ENCODE measurements at regions of chr2 and their contacts with region 1.

Region 1: DNA sequence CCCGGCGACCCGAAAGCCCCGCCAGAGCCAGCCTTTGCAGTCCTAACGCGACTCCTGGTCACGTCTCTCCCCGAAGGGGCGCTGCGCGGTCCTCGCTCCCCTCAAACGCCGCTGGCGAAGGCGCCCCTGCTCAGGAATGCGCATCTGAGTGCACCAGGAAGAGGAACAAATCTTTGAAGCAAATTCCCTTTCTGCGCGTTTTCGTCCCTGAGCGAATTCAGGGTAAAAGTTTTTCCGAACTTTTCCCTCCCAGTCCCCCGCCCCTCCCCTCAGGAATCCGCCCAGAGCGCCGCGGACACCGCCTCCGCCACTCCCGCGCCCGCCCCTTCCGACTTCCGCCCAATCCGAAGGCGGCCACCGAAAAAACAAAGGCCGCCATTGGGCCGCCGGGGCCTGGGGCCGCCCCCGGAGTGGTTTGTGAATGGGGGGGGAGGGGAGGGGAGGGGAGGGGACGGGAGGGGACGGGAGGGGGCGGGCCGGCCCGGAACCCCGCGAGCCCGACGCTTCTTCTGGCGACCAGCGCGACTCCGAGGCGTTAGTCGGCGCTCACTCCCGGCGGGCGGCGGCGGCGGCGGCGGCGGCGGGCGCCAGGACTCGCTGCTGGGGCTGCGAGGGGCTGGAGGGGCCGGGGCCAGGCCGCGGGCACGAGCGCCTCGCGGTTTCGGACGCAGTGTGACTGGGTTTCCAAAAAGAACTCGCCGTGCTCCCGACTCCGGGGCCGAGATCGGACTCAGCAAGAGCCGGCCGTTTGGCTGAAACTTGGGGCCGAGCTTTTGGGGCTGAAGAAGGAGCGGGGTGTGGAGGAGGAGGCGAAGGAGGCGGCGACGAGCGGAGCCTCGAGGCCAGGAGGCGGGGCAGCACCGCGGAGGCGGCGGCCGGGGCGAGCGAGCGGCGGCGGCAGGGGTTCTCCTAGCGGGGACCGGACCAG is at the start of gene FZD7:
- DNase-seq: peak; percentile 96 to 97
- H3K4me3 ChIP-seq: peak within 1 kb of the TSS; percentile 85
- H3K4me3 Mint-ChIP-seq: no peak within 1 kb of the TSS
- H3K27ac Mint-ChIP-seq: peak within 1 kb of the TSS; percentile 96
- H3K4me1 ChIP-seq: peaks cover 33% of the 10 kb centered on the region
- H3K4me1 Mint-ChIP-seq: peaks cover 5% of the 10 kb centered on the region
- H3K27me3 ChIP-seq: no peaks in the 10 kb centered on the region
- H3K27me3 Mint-ChIP-seq: no peaks in the 10 kb centered on the region
- CTCF ChIP-seq: peak; percentile 33 to 44
- total RNA-seq, gene FZD7: 40.4 and 41.4 TPM in 2 replicates

Region 2: DNA sequence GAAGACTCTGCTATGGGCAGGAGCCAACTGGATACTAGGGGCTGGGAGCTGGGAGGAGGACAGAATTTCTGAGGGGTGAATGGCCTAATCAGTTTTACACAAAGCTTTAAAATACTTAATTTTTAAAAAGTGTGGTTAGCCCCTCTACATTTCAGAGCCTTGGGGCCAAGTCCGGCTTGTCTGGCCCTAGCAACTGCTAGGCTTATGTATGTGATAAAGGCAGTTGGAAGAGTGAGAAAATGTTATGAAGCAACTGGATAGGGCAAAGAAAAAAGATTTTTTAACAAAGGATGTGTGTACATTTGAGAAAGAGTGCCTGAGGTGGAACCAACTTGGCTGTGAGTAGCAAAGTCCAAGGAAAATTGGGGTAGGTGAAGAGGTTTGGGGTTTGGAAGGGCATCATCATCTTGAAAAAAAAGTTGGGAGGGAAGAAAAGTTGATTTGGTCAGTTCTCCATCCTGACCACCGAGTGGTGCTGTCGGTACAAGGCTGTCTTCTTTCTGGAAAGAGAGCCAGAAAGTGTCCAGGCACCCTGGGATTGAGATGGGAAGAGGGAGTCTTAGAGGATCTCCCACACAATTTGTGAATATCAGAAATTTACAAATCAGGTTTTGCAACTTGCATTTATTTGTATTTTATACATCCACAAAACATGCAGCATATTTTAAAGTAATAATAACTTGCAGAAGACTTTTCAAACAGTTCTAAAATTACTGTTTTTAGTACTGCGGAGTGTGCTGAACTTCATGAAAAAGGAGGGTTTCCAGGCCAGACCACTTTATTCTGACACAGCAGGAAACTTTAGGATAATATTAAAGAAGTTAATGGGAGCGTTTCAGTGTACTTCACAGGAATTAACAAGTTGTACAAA is 237.7 kb before region 1 on chr2:
- CTCF ChIA-PET with region 1: no interaction called
- POLR2A ChIA-PET with region 1: no interaction called
- intact Hi-C with region 1: loop called (anchors 5 kb)
- DNase-seq: peak in 1 of 2 experiments; percentile 48
- H3K4me3 ChIP-seq: no peak overlapping the region
- H3K4me3 Mint-ChIP-seq: no peak overlapping the region
- H3K27ac Mint-ChIP-seq: no peak overlapping the region
- H3K4me1 ChIP-seq: peaks cover 5% of the 10 kb centered on the region; the same call in 1 of the 2 replicates
- H3K4me1 Mint-ChIP-seq: no peaks in the 10 kb centered on the region
- H3K27me3 ChIP-seq: no peaks in the 10 kb centered on the region
- H3K27me3 Mint-ChIP-seq: no peaks in the 10 kb centered on the region
- CTCF ChIP-seq: peak; percentile 58 to 87

Region 3: GRCh38 chr2:201866643-201867473 is 166.7 kb before region 1 on chr2:
- CTCF ChIA-PET with region 1: interaction called, 3 read pairs
- POLR2A ChIA-PET with region 1: no interaction called
- intact Hi-C with region 1: loop called (anchors 1 kb)
- DNase-seq: peak; percentile 43 to 75
- H3K4me3 ChIP-seq: no peak overlapping the region
- H3K4me3 Mint-ChIP-seq: peak overlapping the region; percentile 43
- H3K27ac Mint-ChIP-seq: peak overlapping the region; percentile 80
- H3K4me1 ChIP-seq: peaks cover 33% of the 10 kb centered on the region
- H3K4me1 Mint-ChIP-seq: peaks cover 36% of the 10 kb centered on the region
- H3K27me3 ChIP-seq: no peaks in the 10 kb centered on the region
- H3K27me3 Mint-ChIP-seq: no peaks in the 10 kb centered on the region
- CTCF ChIP-seq: no peak

Region 4: GRCh38 chr2:201964631-201965206 is 68.9 kb before region 1 on chr2:
- CTCF ChIA-PET with region 1: no interaction called
- POLR2A ChIA-PET with region 1: no interaction called
- intact Hi-C with region 1: loop called (anchors 1 kb)
- DNase-seq: no peak
- H3K4me3 ChIP-seq: no peak overlapping the region
- H3K4me3 Mint-ChIP-seq: no peak overlapping the region
- H3K27ac Mint-ChIP-seq: no peak overlapping the region
- H3K4me1 ChIP-seq: peaks cover 15% of the 10 kb centered on the region
- H3K4me1 Mint-ChIP-seq: peaks cover 15% of the 10 kb centered on the region
- H3K27me3 ChIP-seq: no peaks in the 10 kb centered on the region
- H3K27me3 Mint-ChIP-seq: no peaks in the 10 kb centered on the region
- CTCF ChIP-seq: no peak

Region 5: GRCh38 chr2:202135091-202135874 is 101.7 kb after region 1 on chr2:
- CTCF ChIA-PET with region 1: no interaction called
- POLR2A ChIA-PET with region 1: no interaction called
- intact Hi-C with region 1: loop called (anchors 2 kb)
- DNase-seq: peak; percentile 92 to 94
- H3K4me3 ChIP-seq: no peak overlapping the region
- H3K4me3 Mint-ChIP-seq: peak overlapping the region; percentile 61
- H3K27ac Mint-ChIP-seq: peak overlapping the region; percentile 95
- H3K4me1 ChIP-seq: peaks cover 36% of the 10 kb centered on the region
- H3K4me1 Mint-ChIP-seq: peaks cover 24% of the 10 kb centered on the region
- H3K27me3 ChIP-seq: no peaks in the 10 kb centered on the region
- H3K27me3 Mint-ChIP-seq: no peaks in the 10 kb centered on the region
- CTCF ChIP-seq: peak in 1 of 2 experiments; percentile 18

Measured in Caco-2 (cell line).